Activated CD4-positive, alpha-beta T cell treated with anti-CD3 and anti-CD28 coated beads, Interleukin-2, amount 10 ng/mL, durations not matched to agents 24 days and 14 days (primary cell): ENCODE measurements at regions of chr22 and their contacts with region 1.

Region 1: GRCh38 chr22:37561212-37562048 is 1.1 kb downstream of the CDC42EP1 start:
- DNase-seq: peak; percentile 91
- H3K4me3 Mint-ChIP-seq: peak overlapping the region; percentile 67
- H3K27ac Mint-ChIP-seq: peak overlapping the region; percentile 74
- H3K4me1 Mint-ChIP-seq: peaks cover 17% of the 10 kb centered on the region
- H3K27me3 Mint-ChIP-seq: peaks cover 59% of the 10 kb centered on the region

Region 2: GRCh38 chr22:37544955-37545699 is 16.3 kb before region 1 on chr22:
- intact Hi-C with region 1: loop called (anchors 1 kb)
- DNase-seq: peak; percentile 88
- H3K4me3 Mint-ChIP-seq: no peak overlapping the region
- H3K27ac Mint-ChIP-seq: no peak overlapping the region
- H3K4me1 Mint-ChIP-seq: peaks cover 29% of the 10 kb centered on the region
- H3K27me3 Mint-ChIP-seq: peaks cover 11% of the 10 kb centered on the region